CD4-positive, alpha-beta memory T cell (primary cell): ENCODE measurements at regions of chrX and their contacts with region 1.

Region 1: GRCh38 chrX:56563231-56564161 is at the start of gene UBQLN2:
- DNase-seq: peak; percentile 76 to 81 (median 79)
- H3K4me3 ChIP-seq: peak within 1 kb of the TSS; percentile 74 to 84
- H3K4me3 Mint-ChIP-seq: peak within 1 kb of the TSS; percentile 88 to 97 (median 90)
- H3K27ac ChIP-seq: peak within 1 kb of the TSS; percentile 94
- H3K27ac Mint-ChIP-seq: peak within 1 kb of the TSS; percentile 93 to 99 (median 98)
- H3K4me1 ChIP-seq: peaks cover 19% of the 10 kb centered on the region
- H3K4me1 Mint-ChIP-seq: peaks cover 6 to 32% (median 12%) of the 10 kb centered on the region in 4 donors
- H3K27me3 ChIP-seq: no peaks in the 10 kb centered on the region
- H3K27me3 Mint-ChIP-seq: no peaks in the 10 kb centered on the region
- total RNA-seq, gene UBQLN2: 62.6 to 64.0 TPM

Region 2: GRCh38 chrX:55624403-55624802 is 939.1 kb before region 1 on chrX:
- CTCF ChIA-PET with region 1: no interaction called
- POLR2A ChIA-PET with region 1: no interaction called
- intact Hi-C with region 1: no loop called
- DNase-seq: no peak
- H3K4me3 ChIP-seq: no peak overlapping the region
- H3K4me3 Mint-ChIP-seq: no peak overlapping the region
- H3K27ac ChIP-seq: no peak overlapping the region
- H3K27ac Mint-ChIP-seq: no peak overlapping the region
- H3K4me1 ChIP-seq: no peaks in the 10 kb centered on the region
- H3K4me1 Mint-ChIP-seq: no peaks in the 10 kb centered on the region
- H3K27me3 ChIP-seq: no peaks in the 10 kb centered on the region
- H3K27me3 Mint-ChIP-seq: peaks cover 0 to 3% of the 10 kb centered on the region in 2 donors

Region 3: GRCh38 chrX:56281789-56282188 is 281.7 kb before region 1 on chrX:
- CTCF ChIA-PET with region 1: no interaction called
- POLR2A ChIA-PET with region 1: no interaction called
- intact Hi-C with region 1: loop called (anchors 1 kb)
- DNase-seq: peak; percentile 32 to 54 (median 42)
- H3K4me3 ChIP-seq: no peak overlapping the region
- H3K4me3 Mint-ChIP-seq: no peak overlapping the region
- H3K27ac ChIP-seq: no peak overlapping the region
- H3K27ac Mint-ChIP-seq: no peak overlapping the region
- H3K4me1 ChIP-seq: peaks cover 7% of the 10 kb centered on the region
- H3K4me1 Mint-ChIP-seq: peaks cover 7 to 9% (median 8%) of the 10 kb centered on the region in 4 donors
- H3K27me3 ChIP-seq: no peaks in the 10 kb centered on the region
- H3K27me3 Mint-ChIP-seq: no peaks in the 10 kb centered on the region

Region 4: DNA sequence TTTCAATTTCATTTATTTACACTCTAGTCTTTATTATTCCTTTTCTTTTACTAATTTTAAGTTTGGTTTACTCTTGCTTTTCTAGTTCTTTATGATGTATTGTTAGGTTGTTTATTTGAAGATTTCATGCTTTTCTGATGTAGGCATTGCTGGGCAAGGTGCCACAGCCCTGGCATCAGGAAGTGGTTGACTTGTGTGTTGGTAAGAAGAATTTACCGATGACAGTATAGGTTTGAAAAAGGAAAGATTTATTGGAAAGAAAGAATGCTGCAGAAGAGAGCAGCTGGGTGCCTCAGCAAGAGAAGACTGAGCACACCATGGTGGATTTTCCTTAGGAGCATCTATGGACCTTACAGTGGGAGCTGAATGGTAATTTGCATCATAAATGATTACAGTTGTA is 178.2 kb before region 1 on chrX:
- CTCF ChIA-PET with region 1: no interaction called
- POLR2A ChIA-PET with region 1: no interaction called
- intact Hi-C with region 1: loop called (anchors 5 kb)
- DNase-seq: peak; percentile 24 to 46 (median 32)
- H3K4me3 ChIP-seq: peak overlapping the region in 1 of 2 donors; percentile 38
- H3K4me3 Mint-ChIP-seq: peak overlapping the region; percentile 84 to 95 (median 87)
- H3K27ac ChIP-seq: peak overlapping the region; percentile 38
- H3K27ac Mint-ChIP-seq: peak overlapping the region; percentile 9 to 83 (median 80)
- H3K4me1 ChIP-seq: peaks cover 36% of the 10 kb centered on the region
- H3K4me1 Mint-ChIP-seq: peaks cover 28 to 59% (median 46%) of the 10 kb centered on the region in 4 donors
- H3K27me3 ChIP-seq: no peaks in the 10 kb centered on the region
- H3K27me3 Mint-ChIP-seq: no peaks in the 10 kb centered on the region

Region 5: DNA sequence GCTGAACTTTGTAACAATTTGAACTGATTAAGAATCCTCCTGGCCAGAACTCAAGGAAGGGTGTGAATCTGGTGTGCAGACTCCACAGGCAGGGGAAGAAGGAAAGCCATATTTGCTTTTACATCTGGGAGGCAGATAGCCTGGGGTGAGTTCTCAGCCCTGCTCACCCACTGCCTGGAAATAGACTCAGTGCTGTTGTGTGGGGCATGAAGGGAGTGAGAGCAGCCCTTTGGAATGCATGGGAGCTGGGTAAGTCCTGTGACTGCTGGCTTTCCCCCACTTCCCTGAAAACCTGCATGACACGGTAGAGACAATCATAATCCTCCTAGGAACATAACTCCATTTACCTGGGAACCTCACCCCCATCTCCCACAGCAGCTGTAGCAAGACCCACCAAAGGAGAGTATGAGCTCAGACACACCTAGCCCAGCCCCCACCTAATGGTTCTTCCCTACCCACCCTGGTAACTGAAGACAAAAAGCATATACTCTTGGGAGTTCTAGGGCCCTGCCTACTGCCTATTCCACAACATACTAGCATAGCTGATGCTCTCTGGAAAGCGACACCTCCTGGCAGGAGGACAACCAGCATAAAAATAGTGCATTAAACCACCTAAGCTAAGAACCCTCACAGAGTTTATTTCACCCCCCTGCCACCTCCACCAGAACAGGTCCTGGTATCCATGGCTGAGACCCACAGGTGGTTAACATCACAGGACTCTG is 59.4 kb before region 1 on chrX:
- CTCF ChIA-PET with region 1: no interaction called
- POLR2A ChIA-PET with region 1: no interaction called
- intact Hi-C with region 1: no loop called
- DNase-seq: no peak
- H3K4me3 ChIP-seq: no peak overlapping the region
- H3K4me3 Mint-ChIP-seq: no peak overlapping the region
- H3K27ac ChIP-seq: no peak overlapping the region
- H3K27ac Mint-ChIP-seq: peak overlapping the region in 2 of 7 donors; percentile 43 to 81
- H3K4me1 ChIP-seq: no peaks in the 10 kb centered on the region
- H3K4me1 Mint-ChIP-seq: no peaks in the 10 kb centered on the region
- H3K27me3 ChIP-seq: no peaks in the 10 kb centered on the region
- H3K27me3 Mint-ChIP-seq: no peaks in the 10 kb centered on the region

Region 6: DNA sequence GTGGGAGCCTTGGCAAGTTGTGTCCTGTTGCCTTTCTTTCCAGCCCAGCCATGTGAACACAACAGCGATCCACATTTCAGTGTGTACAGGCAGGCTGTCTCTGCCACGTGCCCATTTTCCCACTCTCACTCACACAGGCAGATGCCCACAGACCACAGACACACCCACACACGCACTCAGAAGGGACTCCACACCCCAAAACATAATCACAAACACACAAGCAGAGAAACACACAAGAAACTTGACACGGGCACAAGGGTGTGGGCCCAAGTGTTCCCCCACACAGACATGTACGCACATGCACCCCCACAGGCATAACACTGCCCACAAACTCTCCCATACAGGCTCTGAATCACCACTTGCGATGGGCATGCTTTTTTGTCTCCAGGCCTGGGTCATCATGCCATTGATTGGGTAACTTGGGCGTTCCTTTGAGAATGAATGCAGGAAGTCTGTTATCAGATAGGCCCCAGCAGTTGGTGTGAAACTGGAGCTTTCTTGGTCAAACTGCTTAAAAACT is 249.9 kb after region 1 on chrX:
- CTCF ChIA-PET with region 1: no interaction called
- POLR2A ChIA-PET with region 1: no interaction called
- intact Hi-C with region 1: loop called (anchors 2 kb)
- DNase-seq: peak; percentile 70 to 86 (median 76)
- H3K4me3 ChIP-seq: no peak overlapping the region
- H3K4me3 Mint-ChIP-seq: peak overlapping the region; percentile 73 to 92 (median 85)
- H3K27ac ChIP-seq: peak overlapping the region; percentile 75
- H3K27ac Mint-ChIP-seq: peak overlapping the region; percentile 90 to 97 (median 95)
- H3K4me1 ChIP-seq: peaks cover 33% of the 10 kb centered on the region
- H3K4me1 Mint-ChIP-seq: peaks cover 27 to 53% (median 37%) of the 10 kb centered on the region in 4 donors
- H3K27me3 ChIP-seq: no peaks in the 10 kb centered on the region
- H3K27me3 Mint-ChIP-seq: no peaks in the 10 kb centered on the region